ENCODE measurements at regions of chr1 and their contacts with region 1.

Region 1: DNA sequence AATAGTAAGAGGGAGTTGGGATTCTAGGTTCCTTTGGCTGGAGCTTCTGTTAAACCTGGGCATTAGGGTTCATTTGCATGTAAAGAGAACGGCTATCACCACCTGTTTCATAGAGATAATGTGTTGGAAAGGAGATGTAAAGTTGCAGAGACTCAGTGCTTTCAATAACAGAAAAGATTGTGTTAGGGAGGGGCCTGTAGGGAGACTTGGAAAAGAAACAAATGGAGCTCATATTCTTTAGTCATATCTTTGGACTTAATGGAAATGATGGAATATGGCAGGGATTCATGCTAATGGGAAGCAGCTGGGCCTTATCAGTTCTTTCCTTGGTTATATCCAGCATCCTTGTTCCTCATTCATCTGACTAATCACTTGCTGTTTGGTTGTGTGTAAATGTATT is 144.9 kb downstream of the CD247 start:
- DNase-seq: no peak
- ATAC-seq: no peak
- H3K4me3 ChIP-seq: no peak overlapping the region
- H3K27ac ChIP-seq: no peak overlapping the region
- H3K4me1 ChIP-seq: no peaks in the 10 kb centered on the region
- H3K27me3 ChIP-seq: no peaks in the 10 kb centered on the region
- CTCF ChIP-seq: no peak
- EP300 ChIP-seq: no peak
- POLR2A ChIP-seq: no peak
- RAD21 ChIP-seq: no peak

Region 2: GRCh38 chr1:167387251-167387910 is 14.0 kb after region 1 on chr1:
- CTCF ChIA-PET with region 1: no interaction called
- POLR2A ChIA-PET with region 1: no interaction called
- RAD21 ChIA-PET with region 1: interaction called, 3 read pairs
- SMC1A ChIA-PET with region 1: interaction called, 12 read pairs
- in situ Hi-C with region 1: no loop called
- intact Hi-C with region 1: no loop called
- DNase-seq: no peak
- ATAC-seq: no peak
- H3K4me3 ChIP-seq: no peak overlapping the region
- H3K27ac ChIP-seq: no peak overlapping the region
- H3K4me1 ChIP-seq: no peaks in the 10 kb centered on the region
- H3K27me3 ChIP-seq: no peaks in the 10 kb centered on the region
- CTCF ChIP-seq: no peak
- EP300 ChIP-seq: no peak
- POLR2A ChIP-seq: no peak
- RAD21 ChIP-seq: no peak

Measured in GM12878 (cell line).